T-cell (primary cell): ENCODE measurements at regions of chr4 and their contacts with region 1.

Region 1: GRCh38 chr4:148441986-148442831 is at the start of gene NR3C2:
- DNase-seq: peak; percentile 94 to 100 (median 99)
- ATAC-seq: peak; percentile 79 to 84 (median 80)
- H3K4me3 ChIP-seq: peak within 1 kb of the TSS; percentile 86 to 95
- H3K4me3 Mint-ChIP-seq: peak within 1 kb of the TSS; percentile 98 to 100 (median 99)
- H3K27ac ChIP-seq: peak within 1 kb of the TSS; percentile 92
- H3K27ac Mint-ChIP-seq: peak within 1 kb of the TSS; percentile 99
- H3K4me1 ChIP-seq: peaks cover 18 to 28% of the 10 kb centered on the region in 2 experiments
- H3K4me1 Mint-ChIP-seq: peaks cover 50 to 59% (median 57%) of the 10 kb centered on the region in 3 donors
- H3K27me3 ChIP-seq: peaks cover 10 to 11% of the 10 kb centered on the region in 2 experiments
- H3K27me3 Mint-ChIP-seq: peaks cover 0 to 2% of the 10 kb centered on the region in 2 donors
- total RNA-seq, gene NR3C2: 33.5 to 60.4 (median 34.5) TPM

Region 2: DNA sequence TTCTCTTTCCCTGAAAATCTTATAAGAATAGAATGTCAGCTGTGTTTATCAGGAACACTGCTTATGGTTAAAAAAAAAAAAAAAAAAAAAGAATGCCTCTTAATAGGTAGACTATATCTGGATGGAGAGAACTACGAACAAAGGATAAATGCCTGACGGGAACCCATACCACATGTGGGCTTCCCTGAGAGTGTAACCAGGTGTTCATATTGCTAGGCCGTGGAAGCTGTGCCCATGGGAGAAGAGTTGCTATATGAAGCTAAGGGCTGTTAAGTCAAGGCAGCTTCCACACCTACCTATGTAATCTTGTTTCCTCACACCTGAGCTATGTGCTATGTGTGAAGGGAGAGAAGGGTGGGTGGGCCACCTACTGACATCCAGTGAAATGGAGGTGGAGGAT is 797.7 kb before region 1 on chr4:
- CTCF ChIA-PET with region 1: no interaction called
- POLR2A ChIA-PET with region 1: interaction called in 1 of 2 experiments, 14 read pairs
- DNase-seq: no peak
- ATAC-seq: no peak
- H3K4me3 ChIP-seq: no peak overlapping the region
- H3K4me3 Mint-ChIP-seq: no peak overlapping the region
- H3K27ac ChIP-seq: no peak overlapping the region
- H3K27ac Mint-ChIP-seq: no peak overlapping the region
- H3K4me1 ChIP-seq: no peaks in the 10 kb centered on the region
- H3K4me1 Mint-ChIP-seq: peaks cover 45 to 56% (median 50%) of the 10 kb centered on the region in 3 donors
- H3K27me3 ChIP-seq: no peaks in the 10 kb centered on the region
- H3K27me3 Mint-ChIP-seq: no peaks in the 10 kb centered on the region

Region 3: GRCh38 chr4:148054275-148054674 is 387.9 kb before region 1 on chr4:
- CTCF ChIA-PET with region 1: interaction called in 1 of 2 experiments, 3 read pairs
- POLR2A ChIA-PET with region 1: interaction called, 10 to 13 read pairs
- DNase-seq: peak in 1 of 35 experiments; percentile 46
- ATAC-seq: no peak
- H3K4me3 ChIP-seq: no peak overlapping the region
- H3K4me3 Mint-ChIP-seq: peak overlapping the region in 1 of 3 donors; percentile 82
- H3K27ac ChIP-seq: peak overlapping the region; percentile 85
- H3K27ac Mint-ChIP-seq: peak overlapping the region; percentile 88 to 99
- H3K4me1 ChIP-seq: peaks cover 46 to 70% of the 10 kb centered on the region in 2 experiments
- H3K4me1 Mint-ChIP-seq: peaks cover 85 to 89% (median 88%) of the 10 kb centered on the region in 3 donors
- H3K27me3 ChIP-seq: no peaks in the 10 kb centered on the region
- H3K27me3 Mint-ChIP-seq: no peaks in the 10 kb centered on the region

Region 4: GRCh38 chr4:148376151-148376550 is 66.1 kb before region 1 on chr4:
- CTCF ChIA-PET with region 1: interaction called in 1 of 2 experiments, 10 read pairs
- POLR2A ChIA-PET with region 1: interaction called, 3 to 7 read pairs
- DNase-seq: peak; percentile 12 to 82 (median 55)
- ATAC-seq: peak; percentile 78 to 96 (median 93)
- H3K4me3 ChIP-seq: peak overlapping the region in 1 of 2 donors; percentile 20
- H3K4me3 Mint-ChIP-seq: peak overlapping the region; percentile 63 to 80 (median 66)
- H3K27ac ChIP-seq: peak overlapping the region; percentile 58
- H3K27ac Mint-ChIP-seq: peak overlapping the region; percentile 87 to 89
- H3K4me1 ChIP-seq: peaks cover 0 to 7% of the 10 kb centered on the region in 2 experiments
- H3K4me1 Mint-ChIP-seq: peaks cover 38 to 48% (median 42%) of the 10 kb centered on the region in 3 donors
- H3K27me3 ChIP-seq: no peaks in the 10 kb centered on the region
- H3K27me3 Mint-ChIP-seq: no peaks in the 10 kb centered on the region